ENCODE measurements at regions of chr2 and their contacts with region 1.

Region 1: GRCh38 chr2:190408538-190409271 is 550 bp downstream of the MFSD6 start:
- DNase-seq: peak; percentile 80
- H3K4me3 Mint-ChIP-seq: peak overlapping the region; percentile 82
- H3K27ac Mint-ChIP-seq: peak overlapping the region; percentile 88
- H3K4me1 Mint-ChIP-seq: peaks cover 40% of the 10 kb centered on the region
- H3K27me3 Mint-ChIP-seq: no peaks in the 10 kb centered on the region

Region 2: GRCh38 chr2:189440947-189441708 is 967.6 kb before region 1 on chr2 and contains the start of gene WDR75:
- CTCF ChIA-PET with region 1: no interaction called
- POLR2A ChIA-PET with region 1: no interaction called
- intact Hi-C with region 1: loop called (anchors 10 kb)
- DNase-seq: peak; percentile 94
- H3K4me3 Mint-ChIP-seq: no peak within 1 kb of the TSS
- H3K27ac Mint-ChIP-seq: peak within 1 kb of the TSS; percentile 99
- H3K4me1 Mint-ChIP-seq: peaks cover 11% of the 10 kb centered on the region
- H3K27me3 Mint-ChIP-seq: no peaks in the 10 kb centered on the region
- total RNA-seq, gene WDR75: 66.4 to 68.8 TPM

Region 3: DNA sequence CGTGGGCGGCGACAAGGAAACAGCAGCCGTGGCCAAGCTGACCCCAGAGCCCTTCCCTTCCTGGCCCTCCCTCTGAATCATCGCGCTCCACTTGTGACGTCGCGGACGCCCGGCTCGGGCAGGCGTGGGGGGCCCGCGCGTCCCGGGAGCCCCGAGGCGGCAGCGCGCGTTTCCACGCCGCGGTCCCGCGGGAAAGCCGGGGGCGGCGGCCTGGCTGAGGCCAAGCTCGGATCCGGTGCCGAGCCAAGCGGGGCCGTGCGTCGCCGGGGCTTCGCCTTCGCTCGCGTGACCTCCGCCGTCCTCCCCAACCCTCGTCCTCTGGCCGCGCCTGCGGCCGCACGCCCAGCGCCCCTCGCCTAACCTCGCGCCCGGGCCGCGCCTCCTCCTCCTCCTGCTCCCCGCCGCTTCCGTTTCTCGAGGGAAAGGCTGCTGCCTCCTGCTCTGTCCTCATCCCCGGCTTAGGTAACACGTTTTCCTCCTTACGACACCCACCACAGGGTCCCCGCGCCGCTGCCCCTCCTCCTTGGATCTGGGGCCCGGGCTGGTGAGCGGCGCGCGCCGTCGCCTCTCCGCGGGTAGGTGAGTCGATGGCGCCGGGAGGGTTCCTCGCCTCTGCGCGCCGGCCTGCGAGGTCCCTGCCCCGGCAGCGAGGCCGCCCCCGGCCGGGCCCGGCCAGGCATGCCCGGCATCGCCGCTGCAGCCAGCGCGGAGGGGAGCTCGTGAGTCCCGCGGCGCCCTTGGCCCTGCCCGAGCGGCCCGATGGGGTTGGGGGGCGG is 65.0 kb before region 1 on chr2 and contains the start of gene INPP1:
- CTCF ChIA-PET with region 1: no interaction called
- POLR2A ChIA-PET with region 1: interaction called, 5 read pairs
- intact Hi-C with region 1: loop called (anchors 5 kb)
- DNase-seq: peak; percentile 65
- H3K4me3 Mint-ChIP-seq: peak within 1 kb of the TSS; percentile 85
- H3K27ac Mint-ChIP-seq: peak within 1 kb of the TSS; percentile 43
- H3K4me1 Mint-ChIP-seq: peaks cover 22% of the 10 kb centered on the region
- H3K27me3 Mint-ChIP-seq: no peaks in the 10 kb centered on the region
- total RNA-seq, gene INPP1: 15.8 to 16.3 TPM

Region 4: DNA sequence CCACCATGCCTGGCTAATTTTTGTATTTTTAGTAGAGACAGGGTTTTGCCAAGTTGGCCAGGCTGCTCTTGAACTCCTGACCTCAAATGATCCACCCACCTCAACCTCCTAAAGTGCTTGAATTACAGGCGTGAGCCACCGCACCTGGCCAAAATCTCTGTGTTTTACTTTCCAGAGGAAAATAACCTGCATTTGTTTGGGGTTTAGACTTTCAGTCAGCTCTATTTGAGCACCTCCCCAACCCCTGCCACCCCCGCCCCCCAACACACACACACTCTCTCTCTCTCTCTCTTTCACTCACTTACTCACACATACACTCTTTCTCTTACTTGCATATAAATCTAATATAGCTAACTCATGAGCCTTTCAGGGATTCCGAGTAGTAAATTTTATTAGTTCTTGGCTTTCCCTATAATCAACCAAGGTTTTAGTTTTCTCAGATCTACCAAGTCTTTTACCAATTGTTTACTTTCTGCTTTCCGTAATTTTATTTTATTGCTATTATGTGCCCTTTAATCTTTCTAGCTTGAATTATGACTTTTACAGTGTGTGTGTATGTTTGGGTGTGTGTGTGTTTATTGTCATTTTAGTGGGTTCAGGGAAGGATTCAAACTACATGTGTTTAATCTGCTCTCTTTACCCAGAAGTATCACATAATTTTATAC is 24.0 kb after region 1 on chr2:
- CTCF ChIA-PET with region 1: no interaction called
- POLR2A ChIA-PET with region 1: no interaction called
- intact Hi-C with region 1: loop called (anchors 1 kb)
- DNase-seq: peak; percentile 39
- H3K4me3 Mint-ChIP-seq: no peak overlapping the region
- H3K27ac Mint-ChIP-seq: no peak overlapping the region
- H3K4me1 Mint-ChIP-seq: peaks cover 58% of the 10 kb centered on the region
- H3K27me3 Mint-ChIP-seq: no peaks in the 10 kb centered on the region

Region 5: DNA sequence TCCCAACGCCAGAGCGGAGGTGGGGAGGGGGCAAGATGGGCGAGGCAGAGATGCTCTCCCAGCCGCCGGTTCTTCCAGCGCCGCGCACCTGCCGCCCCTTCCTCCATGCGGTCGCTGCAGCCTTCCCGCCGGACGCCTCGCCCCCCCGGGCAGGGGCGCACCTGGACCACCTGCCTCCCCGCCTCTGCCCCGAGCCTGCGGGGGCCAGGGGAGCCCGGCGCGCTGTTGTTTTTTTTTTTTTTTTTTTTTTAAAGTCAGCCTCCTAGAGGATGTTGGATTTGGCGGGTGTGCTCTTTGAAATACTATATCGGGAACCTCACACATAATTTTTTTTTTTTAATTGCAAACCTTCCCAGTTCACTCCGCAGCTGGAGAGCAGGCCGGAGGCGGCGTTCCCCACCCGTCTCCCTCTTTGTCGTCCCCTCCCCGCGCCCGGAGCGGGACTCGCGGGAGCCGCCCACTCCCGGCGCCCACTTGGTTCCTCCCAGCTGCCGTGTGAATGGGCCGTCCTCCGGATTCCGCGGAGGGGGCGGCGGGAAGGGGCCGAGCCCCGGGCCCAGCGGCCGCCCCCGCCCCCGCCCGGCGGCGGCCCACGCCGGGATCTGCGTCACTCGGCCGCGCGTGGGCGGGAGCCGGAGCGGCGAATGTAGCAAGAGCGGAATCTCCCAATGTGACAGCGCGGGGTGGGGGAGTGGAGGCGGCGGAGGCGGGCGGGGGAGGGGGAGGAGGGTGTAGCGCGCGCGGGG is 239.8 kb after region 1 on chr2:
- CTCF ChIA-PET with region 1: no interaction called
- POLR2A ChIA-PET with region 1: interaction called, 3 read pairs
- intact Hi-C with region 1: loop called (anchors 1 kb)
- DNase-seq: peak; percentile 85
- H3K4me3 Mint-ChIP-seq: peak overlapping the region; percentile 75
- H3K27ac Mint-ChIP-seq: peak overlapping the region; percentile 82
- H3K4me1 Mint-ChIP-seq: peaks cover 38% of the 10 kb centered on the region
- H3K27me3 Mint-ChIP-seq: no peaks in the 10 kb centered on the region